ENCODE measurements at regions of chr1 and their contacts with region 1.

Region 1: GRCh38 chr1:58515794-58516401 is 30.6 kb downstream of the OMA1 start:
- DNase-seq: peak in 1 of 2 donors; percentile 62
- H3K4me3 ChIP-seq: no peak overlapping the region
- H3K27ac ChIP-seq: peak overlapping the region; percentile 16 to 24
- H3K4me1 ChIP-seq: peaks cover 0 to 6% of the 10 kb centered on the region in 2 donors
- H3K27me3 ChIP-seq: no peaks in the 10 kb centered on the region
- CTCF ChIP-seq: peak; percentile 65 to 84 (median 78)
- POLR2A ChIP-seq: no peak

Region 2: DNA sequence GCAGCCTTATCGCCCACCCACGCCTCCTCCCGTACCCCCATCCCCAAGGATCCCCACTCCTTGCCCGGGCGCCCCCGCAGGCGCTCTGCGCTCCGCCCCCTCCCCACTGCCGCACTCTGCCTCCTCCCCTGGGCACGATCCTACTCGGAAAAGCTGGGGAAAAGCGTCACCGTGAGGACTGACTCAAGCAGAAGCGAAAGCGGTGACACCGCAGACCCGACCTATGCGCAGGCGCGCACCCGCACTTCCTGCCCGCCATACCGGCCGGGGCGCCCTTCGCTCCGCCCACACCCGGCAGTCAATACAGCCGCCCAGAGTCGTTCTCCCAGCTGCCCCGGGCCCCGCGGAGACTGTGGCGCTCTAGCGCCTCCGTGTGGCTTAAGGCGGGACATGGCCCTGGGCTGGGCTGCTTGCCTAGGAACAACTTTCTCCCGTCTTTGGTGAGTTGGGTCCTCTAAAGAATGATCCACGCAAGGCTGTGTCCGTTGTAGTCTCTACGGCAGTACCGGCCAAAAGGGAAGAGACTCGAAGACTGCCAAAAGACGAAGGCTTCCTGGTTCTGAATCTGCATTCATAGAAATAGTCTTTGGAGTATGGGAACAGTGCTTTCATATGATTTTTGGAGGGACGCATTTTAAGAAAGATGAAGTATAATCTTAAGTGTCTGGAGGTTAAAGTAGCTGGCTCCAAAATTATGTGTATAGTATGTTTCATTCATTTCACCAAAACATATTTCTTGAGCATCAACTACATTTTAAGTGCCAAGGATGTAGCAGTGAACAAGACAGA is 30.8 kb after region 1 on chr1 and contains the start of gene OMA1:
- intact Hi-C with region 1: no loop called
- DNase-seq: peak; percentile 97 to 99
- H3K4me3 ChIP-seq: peak within 1 kb of the TSS; percentile 81 to 85
- H3K27ac ChIP-seq: peak within 1 kb of the TSS; percentile 99 to 100
- H3K4me1 ChIP-seq: peaks cover 0 to 3% of the 10 kb centered on the region in 2 donors
- H3K27me3 ChIP-seq: no peaks in the 10 kb centered on the region
- CTCF ChIP-seq: peak; percentile 98 to 99 (median 99)
- POLR2A ChIP-seq: peak; percentile 84 to 97
- total RNA-seq, gene OMA1: 45.9 to 97.6 (median 65.4) TPM

Region 3: DNA sequence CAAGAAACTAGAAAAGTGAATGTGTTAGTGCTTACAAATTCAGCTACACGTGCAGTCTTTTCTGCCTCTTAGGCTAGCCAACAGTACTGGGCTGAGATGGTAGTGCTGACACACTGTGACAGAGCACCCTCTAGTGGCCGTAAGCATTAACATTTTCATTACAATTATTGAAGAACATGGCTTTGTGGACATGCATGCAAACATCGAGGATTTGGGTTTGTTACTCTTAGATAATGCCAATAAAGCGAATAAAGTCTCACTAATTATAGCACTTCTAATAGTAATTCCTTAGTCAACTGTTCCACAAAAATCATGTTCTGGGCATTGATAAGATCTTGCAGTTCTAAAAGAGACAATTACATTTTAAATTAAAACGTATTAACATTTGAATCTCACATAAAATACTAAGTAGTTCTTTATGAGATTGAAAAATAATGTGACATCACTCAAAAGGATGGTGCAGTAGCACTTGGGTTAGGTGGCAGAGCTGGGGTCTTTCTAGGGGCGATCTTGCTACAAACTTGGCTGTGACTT is 136.8 kb after region 1 on chr1:
- intact Hi-C with region 1: loop called (anchors 5 kb)
- DNase-seq: peak; percentile 44 to 74
- H3K4me3 ChIP-seq: no peak overlapping the region
- H3K27ac ChIP-seq: no peak overlapping the region
- H3K4me1 ChIP-seq: no peaks in the 10 kb centered on the region
- H3K27me3 ChIP-seq: no peaks in the 10 kb centered on the region
- CTCF ChIP-seq: peak; percentile 76 to 92 (median 84)
- POLR2A ChIP-seq: no peak